Naive thymus-derived CD8-positive, alpha-beta T cell (primary cell): ENCODE measurements at regions of chr1 and their contacts with region 1.

Region 1: DNA sequence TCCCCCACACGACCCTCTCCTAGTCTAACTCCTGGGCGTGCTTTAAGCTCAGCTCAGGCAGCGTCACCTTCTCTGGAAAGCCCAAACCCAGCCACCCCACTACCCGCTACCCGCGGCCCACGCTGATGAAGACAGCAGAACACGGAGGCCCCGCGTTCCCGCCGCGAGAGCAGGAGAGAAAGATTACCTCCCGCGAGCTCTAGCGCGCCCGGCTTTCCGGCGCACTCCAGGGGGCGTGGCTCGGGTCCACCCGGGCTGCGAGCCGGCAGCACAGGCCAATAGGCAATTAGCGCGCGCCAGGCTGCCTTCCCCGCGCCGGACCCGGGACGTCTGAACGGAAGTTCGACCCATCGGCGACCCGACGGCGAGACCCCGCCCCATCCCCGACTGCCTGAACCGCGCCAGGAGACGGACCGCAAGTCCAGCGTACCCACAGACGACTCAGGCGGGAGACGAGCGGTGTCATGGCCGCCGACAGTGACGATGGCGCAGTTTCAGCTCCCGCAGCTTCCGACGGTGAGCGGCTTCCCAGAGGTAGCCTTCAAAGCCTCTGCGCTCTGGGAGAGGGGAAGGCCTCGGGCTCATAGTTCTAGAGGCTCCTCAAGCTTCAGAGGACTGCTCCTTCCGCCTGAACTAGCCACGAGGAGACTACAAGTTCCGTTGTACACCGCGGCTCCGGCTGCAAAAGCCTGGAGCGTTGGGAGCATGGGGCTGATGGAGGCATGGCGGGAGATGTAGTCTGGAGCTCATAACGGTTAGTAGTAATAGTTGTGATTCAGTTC is at the starts of genes MUTYH and TOE1:
- DNase-seq: peak; percentile 83 to 92 (median 88)
- ATAC-seq: peak; percentile 83 to 86
- H3K4me3 Mint-ChIP-seq: peak within 1 kb of the TSS; percentile 94 to 100 (median 100)
- H3K27ac Mint-ChIP-seq: peak within 1 kb of the TSS; percentile 98 to 100 (median 99)
- H3K4me1 Mint-ChIP-seq: peaks cover 38 to 81% (median 55%) of the 10 kb centered on the region in 4 donors
- H3K27me3 Mint-ChIP-seq: no peaks in the 10 kb centered on the region
- polyA plus RNA-seq, gene MUTYH: 21.8 to 24.7 (median 24.4) TPM
- polyA plus RNA-seq, gene TOE1: 8.2 to 12.3 (median 10.7) TPM

Region 2: GRCh38 chr1:44631647-44632539 is 708.1 kb before region 1 on chr1:
- POLR2A ChIA-PET with region 1: interaction called, 15 read pairs
- DNase-seq: peak; percentile 79 to 94 (median 86)
- ATAC-seq: peak; percentile 77 to 78
- H3K4me3 Mint-ChIP-seq: peak overlapping the region; percentile 90 to 96 (median 92)
- H3K27ac Mint-ChIP-seq: peak overlapping the region; percentile 96 to 99 (median 98)
- H3K4me1 Mint-ChIP-seq: peaks cover 25 to 53% (median 48%) of the 10 kb centered on the region in 4 donors
- H3K27me3 Mint-ChIP-seq: no peaks in the 10 kb centered on the region

Region 3: DNA sequence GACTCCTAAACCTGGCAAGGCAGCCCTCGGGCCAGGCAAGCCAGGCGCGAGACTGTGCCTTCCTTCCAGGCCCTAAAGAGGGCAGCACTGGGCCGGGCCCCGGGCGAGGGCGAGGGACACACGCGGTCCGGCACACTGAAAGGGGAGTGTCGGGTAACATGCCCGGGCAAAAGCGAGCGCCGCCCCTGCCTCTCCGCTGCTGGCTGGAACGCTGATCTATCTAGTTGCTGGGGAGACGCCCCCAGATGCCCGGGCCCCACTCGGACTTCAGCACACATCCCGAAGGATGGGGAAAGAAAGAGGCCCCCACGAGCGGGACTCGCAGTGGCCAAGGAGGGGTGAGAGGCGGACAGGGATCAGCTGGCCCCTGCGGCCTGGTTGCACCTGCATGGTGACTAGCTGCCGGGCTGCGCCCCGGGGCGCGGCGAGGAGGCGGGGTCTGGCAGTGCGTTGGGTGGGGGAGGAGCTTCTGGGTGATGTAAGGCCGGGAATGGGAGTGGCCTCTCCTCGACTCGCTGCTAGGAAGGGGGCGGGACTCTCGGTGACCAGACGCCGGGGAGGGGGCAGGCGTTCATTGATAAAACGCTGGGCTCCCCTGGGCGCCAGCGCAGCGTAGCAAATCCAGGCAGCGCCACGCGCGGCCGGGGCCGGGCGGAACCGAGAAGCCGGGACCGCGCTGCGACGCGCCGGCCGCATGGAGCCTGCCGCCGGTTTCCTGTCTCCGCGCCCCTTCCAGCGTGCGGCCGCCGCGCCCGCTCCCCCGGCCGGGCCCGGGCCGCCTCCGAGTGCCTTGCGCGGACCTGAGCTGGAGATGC is 540.0 kb before region 1 on chr1 and contains the start of gene PLK3:
- POLR2A ChIA-PET with region 1: interaction called, 10 read pairs
- DNase-seq: peak; percentile 97 to 99 (median 98)
- ATAC-seq: peak; percentile 78 to 81
- H3K4me3 Mint-ChIP-seq: peak within 1 kb of the TSS; percentile 72 to 99 (median 97)
- H3K27ac Mint-ChIP-seq: peak within 1 kb of the TSS; percentile 89 to 99 (median 99)
- H3K4me1 Mint-ChIP-seq: peaks cover 17 to 48% (median 45%) of the 10 kb centered on the region in 4 donors
- H3K27me3 Mint-ChIP-seq: no peaks in the 10 kb centered on the region
- polyA plus RNA-seq, gene PLK3: 14.3 to 36.0 (median 25.5) TPM

Region 4: DNA sequence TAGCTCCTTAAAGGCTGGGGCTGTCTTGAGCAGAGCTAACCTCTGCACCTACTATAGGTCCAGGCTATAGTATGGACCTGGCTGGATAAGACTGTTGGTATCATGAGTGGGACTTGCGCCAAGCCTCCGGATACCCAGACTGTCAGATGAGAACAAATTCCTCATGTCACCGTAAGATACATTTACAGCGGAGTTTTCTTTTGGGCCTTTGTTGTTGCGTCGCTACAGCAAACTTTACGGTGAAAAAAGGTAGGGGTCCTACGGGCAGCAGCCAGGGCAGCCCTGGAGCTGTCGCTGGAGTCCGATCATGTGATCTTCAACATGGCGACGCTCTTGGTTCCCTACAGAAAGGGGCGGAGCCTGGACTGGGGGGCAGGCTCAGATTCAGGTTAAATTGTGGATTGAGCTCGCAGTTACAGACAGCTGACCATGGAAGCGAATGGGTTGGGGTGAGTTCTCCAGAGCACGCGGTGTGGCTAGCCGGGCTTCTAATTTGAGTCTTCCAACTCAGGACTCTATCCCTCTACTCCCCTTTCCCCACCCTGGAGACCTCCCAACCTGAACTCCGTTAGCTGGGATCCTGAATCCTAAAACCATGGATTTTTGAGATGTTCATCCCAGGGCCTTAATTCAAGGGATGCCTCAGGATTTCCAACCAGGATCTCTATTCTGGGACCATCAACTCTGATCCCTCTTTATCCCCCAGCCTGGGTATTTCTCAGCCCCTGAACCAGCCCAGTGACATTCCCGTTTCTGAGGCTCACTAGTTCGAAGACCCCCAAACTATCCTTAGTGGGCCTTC is 327.9 kb before region 1 on chr1 and contains the start of gene UROD:
- POLR2A ChIA-PET with region 1: interaction called, 66 read pairs
- DNase-seq: peak; percentile 75 to 95 (median 88)
- ATAC-seq: peak; percentile 75 to 83
- H3K4me3 Mint-ChIP-seq: peak within 1 kb of the TSS; percentile 81 to 97 (median 93)
- H3K27ac Mint-ChIP-seq: peak within 1 kb of the TSS; percentile 87 to 99 (median 95)
- H3K4me1 Mint-ChIP-seq: peaks cover 21 to 56% (median 49%) of the 10 kb centered on the region in 4 donors
- H3K27me3 Mint-ChIP-seq: no peaks in the 10 kb centered on the region
- polyA plus RNA-seq, gene UROD: 71.6 to 80.9 (median 74.9) TPM

Region 5: GRCh38 chr1:45155423-45155822 is 184.6 kb before region 1 on chr1:
- POLR2A ChIA-PET with region 1: no interaction called
- DNase-seq: no peak
- ATAC-seq: no peak
- H3K4me3 Mint-ChIP-seq: no peak overlapping the region
- H3K27ac Mint-ChIP-seq: no peak overlapping the region
- H3K4me1 Mint-ChIP-seq: peaks cover 0 to 4% (median 2%) of the 10 kb centered on the region in 4 donors
- H3K27me3 Mint-ChIP-seq: peaks cover 0 to 2% (median 1%) of the 10 kb centered on the region in 5 donors

Region 6: DNA sequence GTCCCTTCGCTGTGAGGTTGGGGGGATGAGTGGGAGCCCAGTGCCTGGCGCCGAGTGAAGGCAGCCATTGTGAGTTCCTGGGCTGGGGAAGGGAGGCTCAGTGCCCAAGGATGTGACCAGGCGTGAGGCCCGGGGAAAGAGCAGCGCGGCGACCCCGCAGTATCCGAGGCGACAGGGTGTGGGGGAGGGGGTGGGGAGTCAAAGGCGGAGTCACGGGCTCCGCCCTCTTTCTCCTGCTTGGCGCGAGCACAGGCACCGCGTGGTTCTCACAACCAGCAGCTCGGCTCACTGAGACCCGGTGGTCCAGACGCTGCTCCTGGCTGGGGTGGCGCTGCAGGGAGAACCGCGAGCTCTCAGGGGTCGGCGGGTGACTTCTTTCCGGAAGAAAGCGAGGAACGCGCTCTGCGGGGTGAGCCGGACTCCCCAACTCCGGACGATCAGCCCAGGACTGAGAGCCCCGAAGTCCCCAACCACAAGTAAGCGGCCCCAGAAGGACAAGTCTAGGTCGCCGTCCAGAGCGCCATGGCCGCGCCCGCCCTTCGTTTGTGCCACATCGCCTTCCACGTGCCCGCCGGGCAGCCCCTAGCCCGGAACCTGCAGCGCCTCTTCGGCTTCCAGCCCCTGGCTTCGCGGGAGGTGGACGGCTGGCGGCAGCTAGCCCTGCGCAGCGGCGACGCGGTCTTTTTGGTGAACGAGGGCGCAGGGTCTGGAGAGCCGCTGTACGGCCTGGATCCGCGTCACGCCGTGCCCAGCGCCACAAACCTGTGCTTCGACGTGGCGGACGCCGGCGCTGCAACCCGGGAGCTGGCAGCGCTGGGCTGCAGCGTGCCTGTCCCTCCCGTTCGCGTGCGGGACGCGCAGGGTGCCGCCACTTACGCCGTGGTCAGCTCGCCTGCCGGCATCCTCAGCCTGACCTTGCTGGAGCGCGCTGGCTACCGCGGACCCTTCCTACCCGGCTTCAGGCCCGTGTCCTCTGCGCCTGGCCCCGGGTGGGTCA is 13.1 kb before region 1 on chr1 and contains the start of gene HPDL:
- POLR2A ChIA-PET with region 1: interaction called, 64 read pairs
- DNase-seq: peak; percentile 27 to 76 (median 51)
- ATAC-seq: peak; percentile 84 to 85
- H3K4me3 Mint-ChIP-seq: peak within 1 kb of the TSS; percentile 81 to 92 (median 84)
- H3K27ac Mint-ChIP-seq: peak within 1 kb of the TSS in 9 of 10 donors; percentile 14 to 86 (median 61)
- H3K4me1 Mint-ChIP-seq: peaks cover 0 to 20% (median 11%) of the 10 kb centered on the region in 4 donors
- H3K27me3 Mint-ChIP-seq: peaks cover 0 to 3% (median 0%) of the 10 kb centered on the region in 5 donors
- polyA plus RNA-seq, gene HPDL: 0.47 to 2.7 (median 1.2) TPM

Region 7: DNA sequence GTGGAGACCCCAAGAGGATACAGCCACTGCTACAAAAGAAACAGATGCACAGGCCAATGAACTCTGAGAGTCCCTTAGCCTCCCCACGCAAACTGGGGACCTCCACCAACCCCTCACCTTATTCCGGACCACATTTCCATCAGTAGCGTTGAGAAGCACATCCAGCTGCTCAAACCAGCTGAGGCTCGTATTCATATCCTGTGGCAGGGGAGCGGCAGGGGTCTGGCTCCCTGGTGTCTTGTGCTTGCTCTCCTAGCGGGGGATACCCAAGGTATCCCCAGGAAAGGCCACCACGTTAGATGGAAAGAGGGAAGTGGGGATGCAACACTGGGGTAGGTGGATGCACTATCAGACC is 159.4 kb after region 1 on chr1:
- POLR2A ChIA-PET with region 1: interaction called, 22 read pairs
- DNase-seq: no peak
- ATAC-seq: no peak
- H3K4me3 Mint-ChIP-seq: peak overlapping the region; percentile 89 to 98 (median 95)
- H3K27ac Mint-ChIP-seq: peak overlapping the region; percentile 72 to 97 (median 95)
- H3K4me1 Mint-ChIP-seq: peaks cover 26 to 40% (median 36%) of the 10 kb centered on the region in 4 donors
- H3K27me3 Mint-ChIP-seq: no peaks in the 10 kb centered on the region

Region 8: GRCh38 chr1:45583264-45583665 is 243.3 kb after region 1 on chr1:
- POLR2A ChIA-PET with region 1: interaction called, 15 read pairs
- DNase-seq: peak in 9 of 10 donors; percentile 88 to 96 (median 94)
- ATAC-seq: peak; percentile 71 to 72
- H3K4me3 Mint-ChIP-seq: peak overlapping the region; percentile 93 to 100 (median 99)
- H3K27ac Mint-ChIP-seq: peak overlapping the region; percentile 94 to 100 (median 99)
- H3K4me1 Mint-ChIP-seq: peaks cover 15 to 41% (median 36%) of the 10 kb centered on the region in 4 donors
- H3K27me3 Mint-ChIP-seq: no peaks in the 10 kb centered on the region